Ascending aorta (tissue), 2 donors: ENCODE measurements at regions of chr20 and their contacts with region 1.

Region 1: GRCh38 chr20:13567663-13568062 is 71.1 kb downstream of the TASP1 start:
- DNase-seq: no peak
- H3K4me3 ChIP-seq: no peak overlapping the region
- H3K27ac ChIP-seq: peak overlapping the region in 1 of 2 donors; percentile 24
- H3K4me1 ChIP-seq: peaks cover 0 to 10% of the 10 kb centered on the region in 2 donors
- H3K27me3 ChIP-seq: no peaks in the 10 kb centered on the region
- CTCF ChIP-seq: no peak

Region 2: GRCh38 chr20:13525225-13525940 is 42.3 kb before region 1 on chr20:
- intact Hi-C with region 1: no loop called
- DNase-seq: no peak
- H3K4me3 ChIP-seq: no peak overlapping the region
- H3K27ac ChIP-seq: no peak overlapping the region
- H3K4me1 ChIP-seq: no peaks in the 10 kb centered on the region
- H3K27me3 ChIP-seq: no peaks in the 10 kb centered on the region
- CTCF ChIP-seq: no peak

Region 3: DNA sequence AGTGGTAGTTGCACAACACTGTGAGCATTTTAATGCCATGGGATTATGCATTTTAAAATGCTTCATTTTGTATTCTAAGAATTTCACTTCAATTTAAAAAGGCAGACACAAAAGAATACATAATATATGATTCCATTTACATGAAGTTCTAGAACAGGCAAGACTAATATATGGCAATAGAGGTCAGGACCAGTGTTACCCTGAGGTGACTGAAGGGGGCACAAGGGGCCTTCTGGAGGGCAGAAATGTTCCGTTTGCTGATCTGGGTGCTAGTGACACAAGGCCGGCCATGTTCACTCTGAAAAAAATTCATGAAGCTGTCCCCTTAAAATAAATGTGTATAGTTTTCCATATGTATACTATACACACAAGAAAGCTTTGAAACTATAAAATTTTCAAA is 42.5 kb after region 1 on chr20:
- intact Hi-C with region 1: loop called (anchors 5 kb)
- DNase-seq: no peak
- H3K4me3 ChIP-seq: no peak overlapping the region
- H3K27ac ChIP-seq: no peak overlapping the region
- H3K4me1 ChIP-seq: peaks cover 3 to 12% of the 10 kb centered on the region in 2 donors
- H3K27me3 ChIP-seq: no peaks in the 10 kb centered on the region
- CTCF ChIP-seq: peak in 1 of 3 experiments; percentile 6

Region 4: GRCh38 chr20:13632431-13632830 is 64.8 kb after region 1 on chr20:
- intact Hi-C with region 1: no loop called
- DNase-seq: no peak
- H3K4me3 ChIP-seq: no peak overlapping the region
- H3K27ac ChIP-seq: no peak overlapping the region
- H3K4me1 ChIP-seq: peaks cover 0 to under 1% of the 10 kb centered on the region in 2 donors
- H3K27me3 ChIP-seq: no peaks in the 10 kb centered on the region
- CTCF ChIP-seq: no peak

Region 5: DNA sequence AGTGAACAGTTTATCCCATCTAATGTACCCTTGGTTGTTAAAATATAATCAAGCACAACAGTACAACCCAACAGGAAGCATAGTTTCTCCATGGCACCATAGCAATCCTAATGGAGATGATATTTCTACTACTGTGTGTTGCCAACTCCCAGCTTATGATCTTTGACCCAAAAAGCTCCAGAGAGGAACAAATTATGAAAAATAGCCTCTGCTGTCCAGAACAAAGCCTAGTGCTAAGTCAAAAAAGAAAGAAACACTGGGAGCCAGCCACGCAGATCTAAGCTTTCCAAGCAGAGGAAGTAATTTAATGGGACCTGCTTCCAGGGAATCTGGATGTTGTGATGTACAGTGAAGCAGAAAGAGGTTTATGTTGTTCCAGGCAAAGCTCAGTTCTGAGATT is 123.3 kb after region 1 on chr20:
- intact Hi-C with region 1: loop called (anchors 10 kb)
- DNase-seq: no peak
- H3K4me3 ChIP-seq: no peak overlapping the region
- H3K27ac ChIP-seq: peak overlapping the region; percentile 72 to 75
- H3K4me1 ChIP-seq: peaks cover 0 to 9% of the 10 kb centered on the region in 2 donors
- H3K27me3 ChIP-seq: no peaks in the 10 kb centered on the region
- CTCF ChIP-seq: no peak